AG04450 (cell line): ENCODE measurements at regions of chrX and their contacts with region 1.

Region 1: GRCh38 chrX:3940000-3940610 is 226.7 kb upstream of the PRKX start:
- DNase-seq: no peak
- H3K4me3 ChIP-seq: no peak overlapping the region
- H3K27ac ChIP-seq: no peak overlapping the region
- H3K27me3 ChIP-seq: no peaks in the 10 kb centered on the region
- CTCF ChIP-seq: peak; percentile 50

Region 2: DNA sequence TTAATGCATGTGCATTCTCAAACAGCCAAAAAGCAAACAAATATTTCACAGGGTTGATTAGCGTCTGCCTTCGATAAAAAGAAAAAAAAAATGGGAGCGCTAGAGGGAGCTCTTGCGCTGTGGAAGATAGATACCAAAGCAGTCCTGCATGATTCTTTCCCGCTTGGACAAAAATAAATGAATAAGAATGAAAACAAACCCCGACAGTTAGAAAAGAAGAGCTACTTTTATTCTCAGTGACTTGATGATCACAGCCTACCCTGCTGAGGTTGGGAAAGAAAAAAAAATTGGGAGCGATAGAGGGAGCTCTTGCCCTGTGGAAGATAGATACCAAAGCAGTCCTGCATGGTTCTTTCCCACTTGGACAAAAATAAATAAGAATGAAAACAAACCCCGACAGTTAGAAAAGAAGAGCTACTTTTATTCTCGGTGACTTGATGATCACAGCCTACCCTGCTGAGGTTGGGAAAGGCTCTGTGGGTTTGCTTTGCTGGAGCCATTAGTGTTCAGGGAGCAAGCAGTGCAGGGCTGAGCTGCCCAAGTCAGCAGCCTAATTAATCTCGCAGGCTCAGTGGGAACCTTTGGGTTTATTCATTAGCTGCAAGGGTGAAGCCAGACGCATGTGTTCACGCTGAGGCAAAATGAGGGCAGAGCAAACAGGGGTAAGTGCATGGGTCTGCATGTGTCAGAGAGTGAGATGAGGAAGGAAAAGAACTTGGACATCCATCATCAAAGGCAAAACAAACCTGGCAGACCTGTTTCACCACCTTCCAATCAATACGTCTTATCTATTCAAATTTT is 22.6 kb after region 1 on chrX:
- CTCF ChIA-PET with region 1: interaction called, 19 read pairs
- POLR2A ChIA-PET with region 1: no interaction called
- DNase-seq: no peak
- H3K4me3 ChIP-seq: no peak overlapping the region
- H3K27ac ChIP-seq: no peak overlapping the region
- H3K27me3 ChIP-seq: no peaks in the 10 kb centered on the region
- CTCF ChIP-seq: peak; percentile 46

Region 3: GRCh38 chrX:4059893-4060292 is 119.8 kb after region 1 on chrX:
- CTCF ChIA-PET with region 1: no interaction called
- POLR2A ChIA-PET with region 1: no interaction called
- DNase-seq: no peak
- H3K4me3 ChIP-seq: no peak overlapping the region
- H3K27ac ChIP-seq: no peak overlapping the region
- H3K27me3 ChIP-seq: no peaks in the 10 kb centered on the region
- CTCF ChIP-seq: no peak